Esophagus muscularis mucosa (tissue), 4 donors: ENCODE measurements at regions of chr1 and their contacts with region 1.

Region 1: GRCh38 chr1:210143465-210144062 is 89.0 kb upstream of the SERTAD4 start:
- DNase-seq: no peak
- H3K4me3 ChIP-seq: no peak overlapping the region
- H3K27ac ChIP-seq: no peak overlapping the region
- H3K4me1 ChIP-seq: no peaks in the 10 kb centered on the region
- H3K27me3 ChIP-seq: peaks cover 0 to 6% (median 0%) of the 10 kb centered on the region in 4 donors
- CTCF ChIP-seq: peak; percentile 56 to 69 (median 66)
- EP300 ChIP-seq: no peak
- POLR2A ChIP-seq: no peak

Region 2: GRCh38 chr1:210159206-210159605 is 15.6 kb after region 1 on chr1:
- intact Hi-C with region 1: no loop called
- DNase-seq: no peak
- H3K4me3 ChIP-seq: no peak overlapping the region
- H3K27ac ChIP-seq: no peak overlapping the region
- H3K4me1 ChIP-seq: no peaks in the 10 kb centered on the region
- H3K27me3 ChIP-seq: no peaks in the 10 kb centered on the region
- CTCF ChIP-seq: no peak
- EP300 ChIP-seq: no peak
- POLR2A ChIP-seq: no peak

Region 3: DNA sequence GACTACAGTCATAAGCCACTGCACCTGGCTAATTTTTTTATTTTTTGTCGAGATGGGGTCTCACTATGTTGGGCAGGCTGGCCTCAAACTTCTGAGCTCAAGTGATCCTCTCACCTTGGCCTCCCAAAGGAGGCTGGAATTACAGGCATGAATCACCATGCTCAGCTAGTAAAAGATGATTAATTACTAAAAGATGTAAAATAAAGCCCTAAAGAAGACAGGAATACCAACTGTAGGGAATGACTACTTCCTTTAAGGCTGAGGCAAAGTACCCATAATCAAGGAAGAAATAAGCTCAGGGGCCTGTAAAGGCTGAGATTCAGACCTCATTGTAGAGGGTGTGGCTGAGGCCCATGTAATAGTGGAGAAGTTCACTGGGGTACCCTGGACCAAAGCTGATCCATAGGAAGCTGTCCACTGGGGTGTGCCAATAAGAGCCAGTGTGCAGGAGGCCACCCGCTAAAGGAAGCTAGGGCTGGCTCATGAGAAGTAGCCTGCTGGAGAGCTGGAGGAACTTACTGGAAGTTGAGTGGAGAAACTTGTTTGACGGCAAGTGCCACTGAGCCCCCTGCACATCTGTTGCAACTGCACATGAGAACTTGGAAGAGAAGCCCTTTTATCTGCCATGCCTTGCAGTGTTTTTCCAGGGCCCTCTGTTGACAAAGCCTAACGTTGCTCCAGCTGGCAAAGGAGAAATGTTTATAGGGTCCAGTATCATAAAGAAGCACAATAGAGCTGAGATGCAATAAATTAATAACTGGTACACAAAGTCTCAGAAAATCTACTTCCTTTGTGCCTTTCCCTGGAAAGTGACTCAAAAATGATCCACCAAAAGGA is 71.2 kb after region 1 on chr1:
- intact Hi-C with region 1: no loop called
- DNase-seq: no peak
- H3K4me3 ChIP-seq: no peak overlapping the region
- H3K27ac ChIP-seq: no peak overlapping the region
- H3K4me1 ChIP-seq: no peaks in the 10 kb centered on the region
- H3K27me3 ChIP-seq: no peaks in the 10 kb centered on the region
- CTCF ChIP-seq: no peak
- EP300 ChIP-seq: no peak
- POLR2A ChIP-seq: no peak

Region 4: GRCh38 chr1:210311726-210312493 is 168.3 kb after region 1 on chr1:
- intact Hi-C with region 1: loop called (anchors 2 kb)
- DNase-seq: no peak
- H3K4me3 ChIP-seq: peak overlapping the region; percentile 44 to 55 (median 48)
- H3K27ac ChIP-seq: peak overlapping the region; percentile 59 to 79 (median 66)
- H3K4me1 ChIP-seq: peaks cover 11 to 17% (median 16%) of the 10 kb centered on the region in 4 donors
- H3K27me3 ChIP-seq: peaks cover 0 to 4% (median 0%) of the 10 kb centered on the region in 4 donors
- CTCF ChIP-seq: no peak
- EP300 ChIP-seq: no peak
- POLR2A ChIP-seq: no peak

Region 5: GRCh38 chr1:210400043-210400840 is 256.7 kb after region 1 on chr1:
- intact Hi-C with region 1: loop called (anchors 5 kb)
- DNase-seq: peak; percentile 80
- H3K4me3 ChIP-seq: no peak overlapping the region
- H3K27ac ChIP-seq: no peak overlapping the region
- H3K4me1 ChIP-seq: no peaks in the 10 kb centered on the region
- H3K27me3 ChIP-seq: no peaks in the 10 kb centered on the region
- CTCF ChIP-seq: peak; percentile 61 to 86 (median 70)
- EP300 ChIP-seq: no peak
- POLR2A ChIP-seq: no peak

Region 6: DNA sequence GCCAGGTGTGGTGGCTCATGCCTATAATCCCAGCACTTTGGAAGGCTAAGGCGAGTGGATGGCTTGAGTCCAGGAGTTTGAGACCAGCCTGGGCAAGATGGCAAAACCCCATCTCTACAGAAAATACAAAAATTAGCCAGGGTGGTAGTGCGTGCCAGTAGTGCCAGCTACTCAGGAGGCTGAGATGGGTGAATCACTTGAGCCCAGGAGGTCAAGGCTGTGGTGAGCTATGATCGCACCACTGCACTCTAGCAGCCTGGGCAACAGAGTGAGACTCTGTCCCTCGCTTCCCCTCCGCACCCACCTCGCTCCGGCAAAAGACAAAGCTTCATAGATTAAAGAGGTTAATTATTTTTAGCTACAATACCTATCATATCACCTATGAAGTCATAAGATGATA is 285.1 kb after region 1 on chr1:
- intact Hi-C with region 1: no loop called
- DNase-seq: no peak
- H3K4me3 ChIP-seq: no peak overlapping the region
- H3K27ac ChIP-seq: no peak overlapping the region
- H3K4me1 ChIP-seq: no peaks in the 10 kb centered on the region
- H3K27me3 ChIP-seq: no peaks in the 10 kb centered on the region
- CTCF ChIP-seq: no peak
- EP300 ChIP-seq: no peak
- POLR2A ChIP-seq: no peak